ENCODE measurements at regions of chr19 and their contacts with region 1.

Region 1: DNA sequence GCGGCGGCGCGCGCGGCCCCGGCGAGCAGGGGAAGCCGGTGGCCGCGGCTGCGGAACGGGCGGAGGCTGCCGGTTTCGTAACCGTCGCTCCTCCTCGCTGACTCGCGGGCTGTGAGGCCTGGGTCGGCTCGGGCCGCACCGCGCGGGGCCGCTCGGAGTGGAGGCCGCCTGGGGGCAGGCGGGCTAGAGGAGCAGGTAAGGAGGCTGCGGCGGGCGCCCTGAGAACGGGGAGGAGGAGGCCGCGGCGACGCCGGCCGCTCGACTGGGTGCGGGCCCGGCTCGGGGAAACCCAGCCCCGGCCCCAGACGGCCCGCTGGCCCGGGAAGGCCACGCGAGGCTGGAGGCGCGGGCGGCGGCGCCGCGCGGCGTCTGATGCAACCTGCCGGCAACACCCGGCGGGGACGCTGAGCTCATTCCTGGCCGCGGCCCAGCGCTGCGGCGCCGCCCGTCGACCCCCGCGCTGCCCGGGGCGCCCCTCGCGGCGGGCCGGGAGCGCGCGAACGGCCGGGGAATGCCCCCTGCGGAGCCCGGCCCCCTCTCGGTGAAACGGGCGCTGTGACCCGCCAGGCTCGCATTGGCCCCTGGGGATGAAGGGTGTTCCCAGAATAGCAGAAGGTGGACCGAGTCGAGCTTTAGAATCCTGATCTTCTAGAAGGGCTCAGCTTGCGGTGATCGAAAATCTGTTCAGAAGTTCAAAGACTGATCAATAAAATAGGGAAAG is at the start of gene CEBPG:
- DNase-seq: peak; percentile 70
- H3K4me3 Mint-ChIP-seq: peak within 1 kb of the TSS; percentile 95
- H3K27ac Mint-ChIP-seq: peak within 1 kb of the TSS; percentile 97
- H3K4me1 Mint-ChIP-seq: peaks cover 25% of the 10 kb centered on the region
- H3K27me3 Mint-ChIP-seq: peaks cover 2% of the 10 kb centered on the region
- CTCF ChIP-seq: peak; percentile 27
- total RNA-seq, gene CEBPG: 38.3 and 39.5 TPM in 2 replicates

Region 2: GRCh38 chr19:33302175-33302973 is 71.5 kb before region 1 on chr19 and contains the start of gene CEBPA:
- CTCF ChIA-PET with region 1: no interaction called
- intact Hi-C with region 1: loop called (anchors 5 kb)
- DNase-seq: peak; percentile 88
- H3K4me3 Mint-ChIP-seq: peak within 1 kb of the TSS; percentile 76
- H3K27ac Mint-ChIP-seq: no peak within 1 kb of the TSS
- H3K4me1 Mint-ChIP-seq: peaks cover 14% of the 10 kb centered on the region
- H3K27me3 Mint-ChIP-seq: peaks cover 73% of the 10 kb centered on the region
- CTCF ChIP-seq: peak; percentile 38
- total RNA-seq, gene CEBPA: 1.2 and 1.8 TPM in 2 replicates

Region 3: GRCh38 chr19:33472691-33473652 is 99.1 kb after region 1 on chr19:
- CTCF ChIA-PET with region 1: no interaction called
- intact Hi-C with region 1: no loop called
- DNase-seq: no peak
- H3K4me3 Mint-ChIP-seq: no peak overlapping the region
- H3K27ac Mint-ChIP-seq: no peak overlapping the region
- H3K4me1 Mint-ChIP-seq: no peaks in the 10 kb centered on the region
- H3K27me3 Mint-ChIP-seq: no peaks in the 10 kb centered on the region
- CTCF ChIP-seq: no peak

Measured in Calu3 (cell line).